ENCODE measurements at regions of chr7 and their contacts with region 1.

Region 1: GRCh38 chr7:106176414-106177299 is 64.5 kb upstream of the SYPL1 start:
- DNase-seq: peak; percentile 90
- H3K4me3 Mint-ChIP-seq: no peak overlapping the region
- H3K27ac Mint-ChIP-seq: no peak overlapping the region
- H3K4me1 Mint-ChIP-seq: peaks cover 33% of the 10 kb centered on the region
- H3K27me3 Mint-ChIP-seq: no peaks in the 10 kb centered on the region
- CTCF ChIP-seq: peak; percentile 92

Region 2: GRCh38 chr7:106260136-106260561 is 83.5 kb after region 1 on chr7:
- CTCF ChIA-PET with region 1: no interaction called
- intact Hi-C with region 1: loop called (anchors 5 kb)
- DNase-seq: no peak
- H3K4me3 Mint-ChIP-seq: no peak overlapping the region
- H3K27ac Mint-ChIP-seq: peak overlapping the region; percentile 62
- H3K4me1 Mint-ChIP-seq: peaks cover 25% of the 10 kb centered on the region
- H3K27me3 Mint-ChIP-seq: no peaks in the 10 kb centered on the region
- CTCF ChIP-seq: no peak

Region 3: GRCh38 chr7:106485031-106485551 is 308.4 kb after region 1 on chr7:
- CTCF ChIA-PET with region 1: interaction called, 9 read pairs
- intact Hi-C with region 1: loop called (anchors 5 kb)
- DNase-seq: no peak
- H3K4me3 Mint-ChIP-seq: peak overlapping the region; percentile 30
- H3K27ac Mint-ChIP-seq: peak overlapping the region; percentile 88
- H3K4me1 Mint-ChIP-seq: peaks cover 51% of the 10 kb centered on the region
- H3K27me3 Mint-ChIP-seq: no peaks in the 10 kb centered on the region
- CTCF ChIP-seq: no peak

Region 4: DNA sequence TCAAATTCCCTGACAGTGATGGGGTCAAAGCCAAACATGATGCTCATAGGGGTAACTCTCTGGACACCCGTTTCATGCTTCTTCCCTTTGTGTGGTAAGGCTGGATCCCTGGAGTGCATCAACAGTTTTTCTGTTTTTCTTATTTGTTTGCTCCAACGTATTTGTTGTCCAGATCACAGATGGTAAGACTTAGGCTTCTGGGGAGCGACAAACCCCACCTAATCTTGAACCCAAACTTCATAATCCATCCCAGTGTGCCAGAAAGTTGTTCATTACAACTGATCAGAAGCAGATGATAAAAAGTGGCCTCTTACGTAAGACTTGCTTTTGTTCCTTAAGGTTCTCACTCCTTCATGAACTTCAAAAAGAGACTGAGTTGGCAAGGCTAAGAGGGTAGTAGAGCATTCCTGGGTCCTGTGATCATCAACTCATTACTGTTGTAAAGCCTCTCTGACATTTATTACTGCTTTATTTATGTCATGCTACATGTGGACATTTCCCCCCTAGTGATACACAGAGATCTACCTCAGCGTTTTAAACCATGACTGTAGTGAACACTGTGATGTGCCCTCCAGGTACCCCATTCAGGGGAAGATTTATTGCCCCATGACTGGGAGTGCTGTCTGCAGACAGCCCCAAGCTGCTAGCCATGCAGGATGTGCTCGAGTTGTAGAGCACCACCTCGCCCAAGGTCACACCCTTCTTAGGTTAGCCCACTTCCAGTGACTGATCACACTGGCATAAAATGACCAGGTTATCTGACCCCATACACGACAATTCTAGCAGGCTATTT is 358.8 kb after region 1 on chr7:
- CTCF ChIA-PET with region 1: interaction called, 4 read pairs
- intact Hi-C with region 1: loop called (anchors 5 kb)
- DNase-seq: no peak
- H3K4me3 Mint-ChIP-seq: no peak overlapping the region
- H3K27ac Mint-ChIP-seq: no peak overlapping the region
- H3K4me1 Mint-ChIP-seq: no peaks in the 10 kb centered on the region
- H3K27me3 Mint-ChIP-seq: no peaks in the 10 kb centered on the region
- CTCF ChIP-seq: no peak

Region 5: DNA sequence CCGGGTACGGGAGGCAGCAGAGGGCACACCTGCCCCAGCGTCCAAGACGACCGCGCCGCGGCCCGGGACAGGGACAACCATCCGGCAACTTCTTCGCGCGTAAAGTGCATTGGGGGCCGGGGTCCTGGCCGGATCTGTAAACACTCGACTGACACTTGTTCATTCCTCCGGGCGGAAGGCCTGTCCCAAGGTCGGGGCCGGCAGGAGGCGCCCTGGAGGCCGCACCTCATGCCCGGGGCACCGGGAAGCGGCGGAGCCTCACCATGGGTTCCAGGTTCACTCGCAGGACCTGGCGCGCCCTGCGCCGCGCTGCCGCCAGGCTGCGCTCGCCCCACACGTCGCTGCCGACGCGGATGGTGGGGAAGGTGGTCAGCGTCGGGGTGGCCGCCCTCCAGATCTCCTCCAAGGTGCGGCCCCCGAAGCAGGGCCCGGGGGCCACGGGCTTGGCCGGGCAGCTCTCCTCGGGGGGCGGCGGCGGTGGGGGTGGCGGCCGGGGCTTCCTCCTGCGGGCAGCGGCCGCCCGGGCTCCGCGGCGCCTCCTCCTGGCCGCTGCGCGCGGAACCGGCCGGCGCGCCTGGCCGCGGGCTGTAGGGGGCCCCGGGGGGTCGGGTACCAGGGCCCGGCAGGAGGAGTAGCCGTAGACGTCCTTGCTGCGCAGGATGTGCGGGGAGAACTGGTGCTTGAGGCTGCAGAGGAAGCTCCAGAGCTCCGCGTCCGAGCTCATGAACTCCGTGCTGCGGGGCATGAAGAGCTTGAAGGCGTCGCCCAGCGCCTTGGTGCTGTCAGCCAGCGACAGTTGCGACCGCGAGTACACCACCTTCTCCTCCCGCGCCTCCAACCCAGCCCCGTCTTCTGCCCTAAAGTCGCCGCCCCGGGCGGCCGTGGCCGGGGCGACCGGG is 483.6 kb after region 1 on chr7:
- CTCF ChIA-PET with region 1: interaction called, 11 read pairs
- intact Hi-C with region 1: loop called (anchors 5 kb)
- DNase-seq: peak; percentile 91
- H3K4me3 Mint-ChIP-seq: peak overlapping the region; percentile 75
- H3K27ac Mint-ChIP-seq: peak overlapping the region; percentile 93
- H3K4me1 Mint-ChIP-seq: peaks cover 8% of the 10 kb centered on the region
- H3K27me3 Mint-ChIP-seq: no peaks in the 10 kb centered on the region
- CTCF ChIP-seq: peak; percentile 90

Region 6: GRCh38 chr7:106779877-106780276 is 603.2 kb after region 1 on chr7:
- CTCF ChIA-PET with region 1: interaction called, 9 read pairs
- intact Hi-C with region 1: loop called (anchors 5 kb)
- DNase-seq: peak; percentile 78
- H3K4me3 Mint-ChIP-seq: peak overlapping the region; percentile 42
- H3K27ac Mint-ChIP-seq: peak overlapping the region; percentile 96
- H3K4me1 Mint-ChIP-seq: peaks cover 60% of the 10 kb centered on the region
- H3K27me3 Mint-ChIP-seq: no peaks in the 10 kb centered on the region
- CTCF ChIP-seq: peak; percentile 39

Measured in Calu3 (cell line).